GM23248 (cell line): ENCODE measurements at regions of chr12 and their contacts with region 1.

Region 1: GRCh38 chr12:91178139-91178561 is 4.5 kb downstream of the DCN start:
- DNase-seq: peak; percentile 73
- H3K4me3 ChIP-seq: peak overlapping the region; percentile 81
- H3K27ac ChIP-seq: peak overlapping the region; percentile 63
- H3K4me1 ChIP-seq: peaks cover 65% of the 10 kb centered on the region
- H3K27me3 ChIP-seq: no peaks in the 10 kb centered on the region

Region 2: GRCh38 chr12:90987520-90987919 is 190.6 kb before region 1 on chr12:
- in situ Hi-C with region 1: loop called (anchors 10 kb)
- DNase-seq: no peak
- H3K4me3 ChIP-seq: no peak overlapping the region
- H3K27ac ChIP-seq: no peak overlapping the region
- H3K4me1 ChIP-seq: no peaks in the 10 kb centered on the region
- H3K27me3 ChIP-seq: no peaks in the 10 kb centered on the region

Region 3: GRCh38 chr12:91326058-91327027 is 148.2 kb after region 1 on chr12:
- in situ Hi-C with region 1: loop called (anchors 10 kb)
- DNase-seq: peak; percentile 52
- H3K4me3 ChIP-seq: peak overlapping the region; percentile 53
- H3K27ac ChIP-seq: peak overlapping the region; percentile 50
- H3K4me1 ChIP-seq: peaks cover 25% of the 10 kb centered on the region
- H3K27me3 ChIP-seq: no peaks in the 10 kb centered on the region